Activated CD4-positive, alpha-beta T cell treated with anti-CD3 and anti-CD28 coated beads, Interleukin-2, amount 10 ng/mL, durations not matched to agents 7 days and 5 days (primary cell): ENCODE measurements at regions of chrX and their contacts with region 1.

Region 1: GRCh38 chrX:109472939-109473735 is 8.7 kb downstream of the GUCY2F start:
- DNase-seq: peak; percentile 7
- H3K4me3 Mint-ChIP-seq: no peak overlapping the region
- H3K27ac Mint-ChIP-seq: no peak overlapping the region
- H3K4me1 Mint-ChIP-seq: peaks cover 5% of the 10 kb centered on the region
- H3K27me3 Mint-ChIP-seq: no peaks in the 10 kb centered on the region

Region 2: DNA sequence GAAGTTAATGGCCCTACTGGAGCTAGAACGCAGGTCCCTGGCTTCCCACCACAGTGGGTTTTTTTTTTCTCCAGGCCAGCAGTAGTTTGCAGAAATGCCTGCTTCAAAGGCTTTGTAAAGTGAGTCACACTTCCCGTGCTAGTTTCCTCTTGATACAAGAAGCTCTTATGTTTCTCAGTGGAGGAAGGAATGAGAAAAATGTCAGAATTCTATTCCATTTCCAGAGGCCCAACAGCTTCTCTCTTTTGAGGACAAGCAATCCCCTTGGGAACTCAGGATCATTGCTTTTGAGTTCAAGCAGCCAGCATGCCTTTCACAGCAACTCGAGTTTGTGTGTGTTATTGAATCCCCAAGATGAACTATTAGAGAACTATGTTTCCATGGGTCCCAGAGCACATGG is 125.5 kb before region 1 on chrX:
- CTCF ChIA-PET with region 1: no interaction called
- POLR2A ChIA-PET with region 1: no interaction called
- DNase-seq: no peak
- H3K4me3 Mint-ChIP-seq: no peak overlapping the region
- H3K27ac Mint-ChIP-seq: no peak overlapping the region
- H3K4me1 Mint-ChIP-seq: no peaks in the 10 kb centered on the region
- H3K27me3 Mint-ChIP-seq: no peaks in the 10 kb centered on the region

Region 3: GRCh38 chrX:109440475-109440874 is 32.7 kb before region 1 on chrX:
- CTCF ChIA-PET with region 1: no interaction called
- POLR2A ChIA-PET with region 1: no interaction called
- DNase-seq: no peak
- H3K4me3 Mint-ChIP-seq: no peak overlapping the region
- H3K27ac Mint-ChIP-seq: no peak overlapping the region
- H3K4me1 Mint-ChIP-seq: no peaks in the 10 kb centered on the region
- H3K27me3 Mint-ChIP-seq: no peaks in the 10 kb centered on the region

Region 4: DNA sequence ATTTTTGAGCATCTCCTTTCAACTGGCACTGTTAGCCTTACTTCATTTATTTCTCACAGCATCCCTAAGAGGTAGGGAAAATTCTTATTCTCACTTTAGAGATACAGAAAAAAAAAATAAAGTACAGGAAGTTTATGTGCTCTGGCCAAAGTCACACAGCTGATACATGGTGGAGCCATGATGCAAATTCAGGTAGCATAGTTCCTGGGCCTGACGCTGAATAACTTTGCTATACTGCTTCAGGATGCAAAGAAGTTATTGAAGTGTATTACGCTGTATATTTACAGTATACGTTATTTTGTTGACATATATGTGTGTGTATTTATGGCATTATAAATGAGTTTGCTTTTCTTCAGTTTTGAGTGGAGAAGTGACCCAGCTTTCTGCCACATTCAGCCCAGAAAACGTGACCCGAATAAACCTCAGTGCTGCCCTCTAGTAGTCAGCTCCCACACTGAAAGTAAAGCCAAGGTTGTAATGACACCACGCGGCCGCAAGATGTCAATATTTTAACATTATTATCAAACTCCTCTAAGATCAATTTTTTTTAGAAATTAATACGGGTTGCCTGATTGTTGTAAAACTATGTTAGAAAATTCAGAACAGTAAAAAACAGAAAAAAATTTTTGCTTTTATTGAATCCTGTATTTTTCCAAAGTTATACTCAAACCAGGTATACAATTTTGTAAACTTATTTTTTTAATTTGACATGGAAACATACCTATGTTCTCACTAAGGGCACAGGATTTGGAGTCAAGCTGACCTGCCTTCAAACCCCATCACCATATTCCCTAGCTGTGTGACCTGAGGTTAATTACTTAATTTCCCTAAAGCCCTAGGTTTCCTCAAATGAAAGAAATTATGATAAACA is 12.6 kb after region 1 on chrX:
- CTCF ChIA-PET with region 1: interaction called, 12 read pairs
- POLR2A ChIA-PET with region 1: no interaction called
- DNase-seq: peak; percentile 64
- H3K4me3 Mint-ChIP-seq: no peak overlapping the region
- H3K27ac Mint-ChIP-seq: no peak overlapping the region
- H3K4me1 Mint-ChIP-seq: no peaks in the 10 kb centered on the region
- H3K27me3 Mint-ChIP-seq: peaks cover 5% of the 10 kb centered on the region

Region 5: GRCh38 chrX:109600237-109600651 is 127.1 kb after region 1 on chrX:
- CTCF ChIA-PET with region 1: no interaction called
- POLR2A ChIA-PET with region 1: no interaction called
- DNase-seq: no peak
- H3K4me3 Mint-ChIP-seq: no peak overlapping the region
- H3K27ac Mint-ChIP-seq: no peak overlapping the region
- H3K4me1 Mint-ChIP-seq: no peaks in the 10 kb centered on the region
- H3K27me3 Mint-ChIP-seq: peaks cover 28% of the 10 kb centered on the region

Region 6: GRCh38 chrX:110201799-110202198 is 728.7 kb after region 1 on chrX:
- CTCF ChIA-PET with region 1: no interaction called
- POLR2A ChIA-PET with region 1: no interaction called
- DNase-seq: no peak
- H3K4me3 Mint-ChIP-seq: no peak overlapping the region
- H3K27ac Mint-ChIP-seq: no peak overlapping the region
- H3K4me1 Mint-ChIP-seq: no peaks in the 10 kb centered on the region
- H3K27me3 Mint-ChIP-seq: no peaks in the 10 kb centered on the region